ENCODE measurements at regions of chr2 and their contacts with region 1.

Region 1: DNA sequence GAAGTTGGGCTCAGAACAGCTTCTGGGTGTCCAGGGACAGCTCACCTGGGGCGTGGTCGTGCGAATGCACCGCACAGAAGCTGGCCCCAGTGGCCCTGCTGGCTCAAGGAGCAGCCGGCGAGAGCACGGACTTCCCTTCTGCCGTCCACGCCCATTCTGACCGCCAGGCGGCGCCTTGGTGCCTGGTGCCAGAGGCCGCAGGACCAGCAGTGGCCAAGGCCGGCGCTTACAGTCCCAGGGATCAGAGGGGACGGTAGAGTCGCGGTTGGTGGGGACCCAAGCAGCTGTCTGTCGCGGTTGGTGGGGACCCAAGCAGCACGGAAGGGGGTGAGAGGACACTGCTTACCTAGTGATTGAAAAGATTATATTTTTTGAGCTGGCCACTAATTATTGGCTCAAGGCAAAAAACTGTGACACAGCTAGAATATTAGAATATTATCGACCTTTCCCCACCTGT is 25.7 kb downstream of the NPPC start:
- DNase-seq: peak; percentile 42 to 65 (median 61)
- H3K4me3 ChIP-seq: no peak overlapping the region
- H3K27ac ChIP-seq: no peak overlapping the region
- H3K4me1 ChIP-seq: peaks cover 0 to 2% (median 0%) of the 10 kb centered on the region in 4 experiments
- H3K27me3 ChIP-seq: peaks cover 0 to 2% (median 0%) of the 10 kb centered on the region in 5 experiments

Region 2: GRCh38 chr2:231854671-231855070 is 45.8 kb before region 1 on chr2:
- CTCF ChIA-PET with region 1: no interaction called
- POLR2A ChIA-PET with region 1: no interaction called
- DNase-seq: no peak
- H3K4me3 ChIP-seq: no peak overlapping the region
- H3K27ac ChIP-seq: no peak overlapping the region
- H3K4me1 ChIP-seq: no peaks in the 10 kb centered on the region
- H3K27me3 ChIP-seq: peaks cover 0 to 4% (median 0%) of the 10 kb centered on the region in 5 experiments

Region 3: GRCh38 chr2:231917280-231918066 is 17.0 kb after region 1 on chr2:
- CTCF ChIA-PET with region 1: interaction called, 27 read pairs
- POLR2A ChIA-PET with region 1: no interaction called
- DNase-seq: peak in 1 of 3 donors; percentile 48
- H3K4me3 ChIP-seq: no peak overlapping the region
- H3K27ac ChIP-seq: no peak overlapping the region
- H3K4me1 ChIP-seq: no peaks in the 10 kb centered on the region
- H3K27me3 ChIP-seq: peaks cover 0 to 6% (median 4%) of the 10 kb centered on the region in 5 experiments

Region 4: GRCh38 chr2:231925303-231926179 is 25.0 kb after region 1 on chr2:
- CTCF ChIA-PET with region 1: interaction called, 13 read pairs
- POLR2A ChIA-PET with region 1: no interaction called
- DNase-seq: peak; percentile 64 to 76 (median 72)
- H3K4me3 ChIP-seq: peak overlapping the region in 6 of 7 experiments; percentile 48 to 77 (median 64)
- H3K27ac ChIP-seq: no peak overlapping the region
- H3K4me1 ChIP-seq: peaks cover 0 to 32% (median 30%) of the 10 kb centered on the region in 4 experiments
- H3K27me3 ChIP-seq: peaks cover 0 to 63% (median 25%) of the 10 kb centered on the region in 5 experiments

Region 5: DNA sequence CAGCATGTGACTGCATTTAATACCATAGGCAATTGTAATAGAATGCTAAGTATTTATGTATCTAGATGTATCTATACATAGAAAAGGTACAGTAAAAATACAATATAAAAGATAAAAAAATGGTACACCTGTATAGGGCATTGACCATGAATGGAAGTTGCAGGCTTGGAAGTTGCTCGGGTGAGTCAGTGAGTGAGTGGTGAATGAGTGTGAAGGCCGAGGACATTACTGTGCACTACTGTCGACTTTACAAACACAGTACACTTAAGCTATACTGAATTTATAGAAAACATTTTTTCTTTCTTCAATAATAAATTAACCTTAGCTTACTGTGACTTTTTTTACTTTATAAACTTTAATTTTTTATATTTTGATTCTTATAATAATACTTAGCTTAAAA is 69.9 kb after region 1 on chr2:
- CTCF ChIA-PET with region 1: no interaction called
- POLR2A ChIA-PET with region 1: no interaction called
- DNase-seq: no peak
- H3K4me3 ChIP-seq: no peak overlapping the region
- H3K27ac ChIP-seq: no peak overlapping the region
- H3K4me1 ChIP-seq: peaks cover 2 to 6% (median 5%) of the 10 kb centered on the region in 4 experiments
- H3K27me3 ChIP-seq: no peaks in the 10 kb centered on the region

Measured in common myeloid progenitor, CD34-positive (primary cell).